ENCODE measurements at regions of chr1 and their contacts with region 1.

Region 1: DNA sequence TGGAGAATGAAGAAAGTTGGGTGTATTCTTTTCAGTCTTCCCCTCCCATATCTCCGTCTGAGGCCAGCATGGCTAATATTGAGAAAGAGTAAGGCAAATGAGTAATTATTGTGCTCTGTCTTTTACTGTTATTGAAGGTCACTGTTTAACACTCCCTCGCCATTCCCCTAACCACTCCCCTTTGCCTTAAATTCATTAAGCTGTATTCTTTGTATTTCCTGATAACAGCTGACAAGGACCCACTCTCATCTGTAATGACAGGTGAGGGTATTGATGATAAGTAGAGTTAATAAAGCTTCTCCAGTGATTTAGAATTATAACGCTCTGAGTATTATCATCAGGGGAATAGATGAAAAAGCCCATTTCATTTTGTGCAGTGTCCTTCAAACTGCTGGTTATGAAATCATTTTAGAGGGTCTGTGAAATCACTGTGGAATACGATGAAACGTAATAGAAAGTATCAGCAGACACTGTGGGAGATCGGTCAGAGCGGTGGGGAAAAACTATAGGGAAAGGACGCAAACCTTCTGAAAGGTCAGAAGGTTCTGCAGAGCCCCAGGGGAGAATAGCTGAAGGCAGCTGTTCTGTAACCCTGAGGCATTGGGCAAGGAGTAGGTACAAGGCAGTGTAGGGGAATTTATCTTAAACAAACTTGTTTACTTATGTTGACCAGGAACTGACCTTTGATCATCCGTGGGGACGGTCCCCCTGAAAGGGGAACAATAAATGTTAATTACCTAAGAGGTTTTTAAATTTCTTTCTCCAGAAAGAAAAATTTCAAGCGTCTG is 46.3 kb upstream of the CACYBP start:
- DNase-seq: peak in 1 of 2 experiments; percentile 79
- H3K4me3 ChIP-seq: no peak overlapping the region
- H3K27ac ChIP-seq: peak overlapping the region; percentile 46
- H3K4me1 ChIP-seq: peaks cover 28% of the 10 kb centered on the region
- H3K27me3 ChIP-seq: no peaks in the 10 kb centered on the region
- CTCF ChIP-seq: no peak

Region 2: DNA sequence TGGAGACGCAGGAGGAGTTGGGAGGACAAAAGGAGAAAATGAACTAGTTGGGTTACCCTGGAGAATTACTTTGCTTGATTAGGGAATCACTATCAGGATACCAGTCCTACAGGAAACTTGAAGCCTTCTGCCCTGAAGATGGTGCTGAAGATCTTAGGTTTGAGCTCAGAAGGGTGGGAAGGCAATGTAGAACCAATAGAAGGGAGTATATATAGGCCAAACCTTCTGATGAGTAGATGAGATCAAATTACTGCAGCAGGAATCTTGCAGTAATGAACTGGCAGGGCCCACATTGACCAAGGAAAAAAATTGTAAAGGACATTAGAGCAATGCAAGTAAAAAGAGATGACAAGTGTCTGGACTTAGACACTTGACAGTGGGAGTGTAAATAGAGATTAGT is 70.1 kb before region 1 on chr1:
- CTCF ChIA-PET with region 1: interaction called, 17 read pairs
- POLR2A ChIA-PET with region 1: no interaction called
- intact Hi-C with region 1: no loop called
- DNase-seq: peak; percentile 12 to 73
- H3K4me3 ChIP-seq: no peak overlapping the region
- H3K27ac ChIP-seq: no peak overlapping the region
- H3K4me1 ChIP-seq: peaks cover 7% of the 10 kb centered on the region; the same call in 1 of the 2 replicates
- H3K27me3 ChIP-seq: no peaks in the 10 kb centered on the region
- CTCF ChIP-seq: peak; percentile 55

Region 3: GRCh38 chr1:174902531-174903099 is 50.9 kb before region 1 on chr1:
- CTCF ChIA-PET with region 1: no interaction called
- POLR2A ChIA-PET with region 1: no interaction called
- intact Hi-C with region 1: no loop called
- DNase-seq: peak in 1 of 2 experiments; percentile 10
- H3K4me3 ChIP-seq: no peak overlapping the region
- H3K27ac ChIP-seq: no peak overlapping the region
- H3K4me1 ChIP-seq: no peaks in the 10 kb centered on the region
- H3K27me3 ChIP-seq: no peaks in the 10 kb centered on the region
- CTCF ChIP-seq: no peak

Region 4: DNA sequence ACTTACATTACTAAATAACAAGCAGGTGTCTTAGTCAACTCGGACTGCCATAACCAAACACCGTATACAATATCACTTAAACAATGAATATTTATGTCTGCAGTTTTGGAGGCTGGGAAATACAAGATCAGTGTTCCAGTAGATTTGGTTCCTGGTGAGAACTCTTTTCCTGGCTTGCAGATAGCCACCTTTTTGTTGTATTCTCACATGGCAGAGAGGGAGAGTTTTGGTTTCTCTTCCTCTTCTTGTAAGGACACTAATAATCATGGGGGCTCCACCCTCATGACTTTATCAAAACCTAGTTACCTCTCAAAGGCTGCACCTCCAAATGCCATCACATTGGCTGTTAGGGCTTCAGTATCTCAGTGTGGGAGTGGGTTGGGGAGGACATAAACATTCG is 36.6 kb before region 1 on chr1:
- CTCF ChIA-PET with region 1: no interaction called
- POLR2A ChIA-PET with region 1: no interaction called
- intact Hi-C with region 1: loop called (anchors 1 kb)
- DNase-seq: no peak
- H3K4me3 ChIP-seq: no peak overlapping the region
- H3K27ac ChIP-seq: no peak overlapping the region
- H3K4me1 ChIP-seq: no peaks in the 10 kb centered on the region
- H3K27me3 ChIP-seq: no peaks in the 10 kb centered on the region
- CTCF ChIP-seq: no peak

Measured in PC-9 (cell line).